ENCODE measurements at regions of chr5 and their contacts with region 1.

Region 1: DNA sequence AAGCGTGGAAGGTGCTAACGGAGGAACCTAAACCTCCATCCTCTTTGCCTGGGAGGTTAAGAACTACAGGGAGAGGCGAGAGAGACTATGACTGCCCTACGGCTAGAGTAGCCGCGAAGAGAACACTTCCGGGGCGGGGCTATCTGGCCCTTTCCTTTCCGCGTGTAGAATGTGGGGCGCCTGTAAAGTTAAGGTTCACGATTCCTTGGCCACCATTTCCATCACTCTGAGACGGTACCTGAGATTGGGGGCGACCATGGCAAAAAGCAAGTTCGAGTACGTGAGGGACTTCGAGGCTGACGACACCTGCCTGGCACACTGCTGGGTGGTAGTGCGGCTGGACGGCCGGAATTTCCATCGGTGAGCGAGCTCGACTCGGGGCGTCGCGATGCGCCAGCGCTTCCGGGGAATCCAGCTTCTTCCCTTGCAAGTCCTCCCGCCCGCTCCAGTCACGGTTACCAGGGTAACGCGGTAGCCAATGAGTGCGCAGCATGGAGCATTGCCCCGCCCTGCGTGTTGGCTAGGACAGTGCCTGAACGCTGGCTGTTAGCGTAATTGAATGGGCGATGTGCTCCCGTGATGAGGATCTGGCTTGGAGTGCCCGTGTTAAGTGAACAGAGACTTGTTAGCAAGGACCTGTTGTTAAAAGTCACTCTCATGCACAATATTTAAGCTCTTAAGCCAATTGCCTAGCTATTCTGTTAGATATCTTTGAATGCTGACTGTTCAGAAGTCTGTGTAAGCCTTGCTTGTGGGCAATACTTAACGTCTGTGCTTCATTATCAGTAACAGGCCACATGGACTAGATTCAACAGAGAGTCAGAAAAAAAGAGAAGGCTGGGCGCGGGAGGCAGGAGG is at the start of gene THG1L:
- DNase-seq: peak; percentile 94 to 98 (median 96)
- ATAC-seq: peak; percentile 98
- H3K4me3 ChIP-seq: peak within 1 kb of the TSS; percentile 73
- H3K4me3 Mint-ChIP-seq: peak within 1 kb of the TSS; percentile 87 to 99 (median 97)
- H3K27ac ChIP-seq: peak within 1 kb of the TSS; percentile 73
- H3K27ac Mint-ChIP-seq: peak within 1 kb of the TSS; percentile 80 to 98 (median 93)
- H3K4me1 ChIP-seq: peaks cover 3 to 7% of the 10 kb centered on the region in 2 donors
- H3K4me1 Mint-ChIP-seq: peaks cover 9 to 26% (median 23%) of the 10 kb centered on the region in 7 donors
- H3K27me3 ChIP-seq: no peaks in the 10 kb centered on the region
- H3K27me3 Mint-ChIP-seq: no peaks in the 10 kb centered on the region
- total RNA-seq, gene THG1L: 6.2 to 17.4 (median 7.4) TPM

Region 2: GRCh38 chr5:157328277-157328912 is 403.1 kb before region 1 on chr5:
- CTCF ChIA-PET with region 1: no interaction called
- POLR2A ChIA-PET with region 1: no interaction called
- intact Hi-C with region 1: loop called in 1 of 2 experiments (anchors 1 kb)
- DNase-seq: peak in 8 of 9 donors; percentile 42 to 67 (median 60)
- ATAC-seq: peak; percentile 93
- H3K4me3 ChIP-seq: no peak overlapping the region
- H3K4me3 Mint-ChIP-seq: peak overlapping the region; percentile 29 to 80 (median 68)
- H3K27ac ChIP-seq: peak overlapping the region; percentile 63
- H3K27ac Mint-ChIP-seq: peak overlapping the region; percentile 71 to 95 (median 91)
- H3K4me1 ChIP-seq: peaks cover 10 to 24% of the 10 kb centered on the region in 2 donors
- H3K4me1 Mint-ChIP-seq: peaks cover 28 to 50% (median 45%) of the 10 kb centered on the region in 7 donors
- H3K27me3 ChIP-seq: no peaks in the 10 kb centered on the region
- H3K27me3 Mint-ChIP-seq: no peaks in the 10 kb centered on the region

Region 3: GRCh38 chr5:157540707-157541446 is 190.6 kb before region 1 on chr5:
- CTCF ChIA-PET with region 1: no interaction called
- POLR2A ChIA-PET with region 1: no interaction called
- intact Hi-C with region 1: loop called in 1 of 2 experiments (anchors 2 kb)
- DNase-seq: peak in 1 of 9 donors; percentile 57
- ATAC-seq: peak; percentile 51
- H3K4me3 ChIP-seq: peak overlapping the region; percentile 19
- H3K4me3 Mint-ChIP-seq: peak overlapping the region in 5 of 10 donors; percentile 7 to 81 (median 12)
- H3K27ac ChIP-seq: no peak overlapping the region
- H3K27ac Mint-ChIP-seq: peak overlapping the region in 7 of 9 donors; percentile 2 to 99 (median 45)
- H3K4me1 ChIP-seq: peaks cover 14 to 65% of the 10 kb centered on the region in 2 donors
- H3K4me1 Mint-ChIP-seq: peaks cover 12 to 92% (median 29%) of the 10 kb centered on the region in 7 donors
- H3K27me3 ChIP-seq: no peaks in the 10 kb centered on the region
- H3K27me3 Mint-ChIP-seq: no peaks in the 10 kb centered on the region

Region 4: GRCh38 chr5:157575381-157576020 is 156.0 kb before region 1 on chr5 and contains the start of gene ADAM19:
- CTCF ChIA-PET with region 1: no interaction called
- POLR2A ChIA-PET with region 1: no interaction called
- intact Hi-C with region 1: loop called in 1 of 2 experiments (anchors 5 kb)
- DNase-seq: peak in 4 of 9 donors; percentile 15 to 72 (median 24)
- ATAC-seq: peak; percentile 68
- H3K4me3 ChIP-seq: peak within 1 kb of the TSS; percentile 45
- H3K4me3 Mint-ChIP-seq: peak within 1 kb of the TSS; percentile 85 to 99 (median 94)
- H3K27ac ChIP-seq: no peak within 1 kb of the TSS
- H3K27ac Mint-ChIP-seq: peak within 1 kb of the TSS in 5 of 9 donors; percentile 2 to 92 (median 65)
- H3K4me1 ChIP-seq: peaks cover 11% of the 10 kb centered on the region in 2 donors
- H3K4me1 Mint-ChIP-seq: peaks cover 16 to 73% (median 24%) of the 10 kb centered on the region in 7 donors
- H3K27me3 ChIP-seq: no peaks in the 10 kb centered on the region
- H3K27me3 Mint-ChIP-seq: peaks cover 0 to 14% (median 11%) of the 10 kb centered on the region in 5 donors
- total RNA-seq, gene ADAM19: 0.81 to 410 (median 7.3) TPM

Region 5: DNA sequence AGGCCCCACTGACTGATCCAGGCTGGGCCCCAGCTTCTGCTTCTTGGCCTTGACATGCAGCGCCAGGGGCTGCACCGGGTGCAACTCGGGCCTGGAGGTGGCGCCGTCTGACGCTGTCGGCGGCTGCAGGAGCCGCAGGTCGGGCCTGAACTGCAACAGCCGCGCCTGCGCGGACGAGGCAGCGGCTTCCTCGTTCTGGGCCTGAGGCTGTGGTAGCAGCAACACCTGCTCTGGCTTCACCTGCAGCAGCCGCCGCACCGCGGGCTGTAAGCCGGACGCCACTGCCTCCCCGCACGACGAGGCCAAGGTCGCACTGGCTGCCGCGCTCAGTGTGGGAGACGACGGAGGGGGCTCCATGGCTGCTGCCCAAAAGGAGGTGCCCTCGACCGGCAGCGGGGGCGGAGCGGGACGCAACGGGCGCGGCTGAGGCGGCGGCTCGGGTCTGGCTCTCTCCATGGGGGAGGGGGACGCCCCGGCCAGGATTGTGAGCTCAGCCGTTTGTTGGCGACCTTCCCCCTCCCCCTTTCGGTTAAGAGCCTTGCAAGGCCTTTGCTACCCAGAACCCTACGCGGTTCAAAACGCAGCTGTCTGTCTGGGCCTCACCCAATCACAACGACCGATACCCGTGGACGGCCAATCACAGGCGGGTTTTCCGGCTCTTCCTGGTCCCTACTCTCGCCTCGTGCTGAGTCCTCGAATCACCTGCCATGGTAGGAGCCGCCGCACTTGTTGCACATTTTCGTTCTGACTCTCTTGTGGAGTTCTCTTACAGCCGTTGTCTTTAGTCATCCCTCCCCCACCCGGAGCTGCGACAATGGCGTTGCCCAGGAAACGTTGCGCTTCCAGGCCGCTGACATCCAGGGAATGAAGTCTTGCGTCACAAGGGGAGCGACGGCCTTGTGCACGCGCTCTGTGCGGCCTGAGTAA is 79.6 kb before region 1 on chr5 and contains the start of gene SOX30:
- CTCF ChIA-PET with region 1: no interaction called
- POLR2A ChIA-PET with region 1: no interaction called
- intact Hi-C with region 1: loop called in 1 of 2 experiments (anchors 1 kb)
- DNase-seq: peak; percentile 68 to 87 (median 81)
- ATAC-seq: peak; percentile 98
- H3K4me3 ChIP-seq: peak within 1 kb of the TSS; percentile 54
- H3K4me3 Mint-ChIP-seq: peak within 1 kb of the TSS; percentile 65 to 88 (median 84)
- H3K27ac ChIP-seq: peak within 1 kb of the TSS; percentile 55
- H3K27ac Mint-ChIP-seq: peak within 1 kb of the TSS; percentile 59 to 91 (median 82)
- H3K4me1 ChIP-seq: peaks cover 0 to 4% of the 10 kb centered on the region in 2 donors
- H3K4me1 Mint-ChIP-seq: peaks cover 9 to 19% (median 16%) of the 10 kb centered on the region in 7 donors
- H3K27me3 ChIP-seq: no peaks in the 10 kb centered on the region
- H3K27me3 Mint-ChIP-seq: peaks cover 0 to 3% (median 0%) of the 10 kb centered on the region in 5 donors
- total RNA-seq, gene SOX30: 0.36 TPM in 1 of 5 experiments, not detected in the others

Region 6: GRCh38 chr5:157670662-157671591 is 60.6 kb before region 1 on chr5 and contains the start of gene C5orf52:
- CTCF ChIA-PET with region 1: no interaction called
- POLR2A ChIA-PET with region 1: no interaction called
- intact Hi-C with region 1: loop called in 1 of 2 experiments (anchors 1 kb)
- DNase-seq: peak in 1 of 9 donors; percentile 52
- ATAC-seq: peak; percentile 41
- H3K4me3 ChIP-seq: peak within 1 kb of the TSS; percentile 38
- H3K4me3 Mint-ChIP-seq: peak within 1 kb of the TSS; percentile 69 to 95 (median 82)
- H3K27ac ChIP-seq: no peak within 1 kb of the TSS
- H3K27ac Mint-ChIP-seq: peak within 1 kb of the TSS in 4 of 9 donors; percentile 4 to 85 (median 22)
- H3K4me1 ChIP-seq: peaks cover 0 to 8% of the 10 kb centered on the region in 2 donors
- H3K4me1 Mint-ChIP-seq: peaks cover 16 to 31% (median 25%) of the 10 kb centered on the region in 7 donors
- H3K27me3 ChIP-seq: peaks cover 0 to 15% of the 10 kb centered on the region in 2 donors
- H3K27me3 Mint-ChIP-seq: peaks cover 25 to 49% (median 44%) of the 10 kb centered on the region in 5 donors
- total RNA-seq, gene C5orf52: not detected

Region 7: DNA sequence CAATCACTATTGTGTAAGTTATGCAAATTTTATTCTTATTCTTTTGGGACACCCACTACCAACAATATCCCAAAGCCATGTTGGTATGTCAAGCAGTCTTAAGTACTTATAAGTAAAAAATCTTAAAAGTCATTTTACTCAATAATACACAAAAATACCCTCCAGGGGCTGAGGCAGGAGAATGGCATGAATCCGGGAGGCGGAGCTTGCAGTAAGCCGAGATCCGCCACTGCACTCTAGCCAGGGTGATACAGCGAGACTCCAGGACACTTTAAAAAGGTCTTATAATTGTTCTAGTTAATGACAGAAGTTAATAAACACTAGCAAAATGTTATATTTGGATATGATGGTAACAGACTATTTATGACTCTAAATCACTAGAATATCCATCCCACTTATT is 110.7 kb after region 1 on chr5:
- CTCF ChIA-PET with region 1: no interaction called
- POLR2A ChIA-PET with region 1: no interaction called
- intact Hi-C with region 1: no loop called
- DNase-seq: no peak
- ATAC-seq: no peak
- H3K4me3 ChIP-seq: no peak overlapping the region
- H3K4me3 Mint-ChIP-seq: no peak overlapping the region
- H3K27ac ChIP-seq: no peak overlapping the region
- H3K27ac Mint-ChIP-seq: no peak overlapping the region
- H3K4me1 ChIP-seq: peaks cover 0 to 8% of the 10 kb centered on the region in 2 donors
- H3K4me1 Mint-ChIP-seq: peaks cover 9 to 41% (median 34%) of the 10 kb centered on the region in 7 donors
- H3K27me3 ChIP-seq: no peaks in the 10 kb centered on the region
- H3K27me3 Mint-ChIP-seq: no peaks in the 10 kb centered on the region

Region 8: GRCh38 chr5:158910782-158911692 is 1179.5 kb after region 1 on chr5:
- CTCF ChIA-PET with region 1: no interaction called
- POLR2A ChIA-PET with region 1: no interaction called
- intact Hi-C with region 1: no loop called
- DNase-seq: no peak
- ATAC-seq: no peak
- H3K4me3 ChIP-seq: no peak overlapping the region
- H3K4me3 Mint-ChIP-seq: no peak overlapping the region
- H3K27ac ChIP-seq: no peak overlapping the region
- H3K27ac Mint-ChIP-seq: peak overlapping the region in 1 of 9 donors; percentile 1
- H3K4me1 ChIP-seq: no peaks in the 10 kb centered on the region
- H3K4me1 Mint-ChIP-seq: peaks cover 0 to 5% (median 0%) of the 10 kb centered on the region in 7 donors
- H3K27me3 ChIP-seq: no peaks in the 10 kb centered on the region
- H3K27me3 Mint-ChIP-seq: peaks cover 0 to 6% (median 4%) of the 10 kb centered on the region in 5 donors